Heart right ventricle (tissue), 16 donors: ENCODE measurements at regions of chr15 and their contacts with region 1.

Region 1: GRCh38 chr15:29815000-29815710 is 7.1 kb downstream of the TJP1 start:
- DNase-seq: no peak
- ATAC-seq: peak in 7 of 8 donors; percentile 56 to 87 (median 75)
- H3K4me3 ChIP-seq: no peak overlapping the region
- H3K27ac ChIP-seq: peak overlapping the region in 2 of 10 donors; percentile 9 to 49
- H3K4me1 ChIP-seq: peaks cover 16 to 95% (median 70%) of the 10 kb centered on the region in 9 donors
- H3K27me3 ChIP-seq: peaks cover 0 to 38% (median 0%) of the 10 kb centered on the region in 7 donors
- CTCF ChIP-seq: no peak

Region 2: DNA sequence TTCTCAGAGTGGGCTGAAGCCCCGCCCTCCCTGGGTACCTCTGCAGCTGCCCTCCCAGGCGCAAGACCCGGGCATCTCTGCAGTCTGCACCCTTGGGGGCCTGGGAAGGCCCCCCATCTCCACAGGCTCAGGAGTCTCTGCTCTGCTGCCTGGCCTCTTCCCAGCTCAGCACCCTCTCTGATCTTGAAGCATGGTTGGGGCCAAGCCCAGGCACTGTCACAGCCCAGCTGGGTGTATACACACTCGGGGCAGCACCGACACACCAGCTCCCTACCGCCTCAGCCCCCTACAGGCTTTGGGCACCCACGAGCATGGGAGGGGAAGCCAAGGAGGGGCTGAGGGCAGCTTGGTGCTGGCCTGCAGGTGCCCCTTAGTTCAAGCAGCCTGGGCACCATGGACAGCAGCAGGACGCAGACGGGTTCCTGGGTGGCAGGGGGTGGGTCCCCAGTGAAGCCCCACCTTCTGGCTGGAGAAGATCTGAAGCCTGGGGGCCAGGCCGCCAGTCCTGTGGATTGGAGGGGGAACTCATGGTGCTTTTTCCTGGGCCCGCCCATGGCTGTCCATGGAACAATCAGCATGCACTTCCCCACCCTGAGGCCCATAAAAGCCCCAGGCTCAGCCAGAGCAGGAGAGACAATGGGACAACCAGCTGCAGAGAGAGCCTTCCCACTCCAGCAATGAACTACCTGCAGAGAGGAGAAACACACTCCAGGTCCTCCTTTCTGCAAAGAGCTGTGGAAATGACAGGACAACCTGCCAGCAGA is 163.5 kb before region 1 on chr15:
- intact Hi-C with region 1: no loop called
- DNase-seq: no peak
- ATAC-seq: no peak
- H3K4me3 ChIP-seq: no peak overlapping the region
- H3K27ac ChIP-seq: no peak overlapping the region
- H3K4me1 ChIP-seq: no peaks in the 10 kb centered on the region
- H3K27me3 ChIP-seq: peaks cover 0 to 3% (median 0%) of the 10 kb centered on the region in 7 donors
- CTCF ChIP-seq: no peak

Region 3: GRCh38 chr15:29756358-29757267 is 58.5 kb before region 1 on chr15:
- intact Hi-C with region 1: loop called in 8 of 10 experiments (anchors 5 to 10 kb)
- DNase-seq: no peak
- ATAC-seq: peak in 4 of 8 donors; percentile 51 to 64 (median 56)
- H3K4me3 ChIP-seq: no peak overlapping the region
- H3K27ac ChIP-seq: peak overlapping the region in 5 of 10 donors; percentile 17 to 53 (median 37)
- H3K4me1 ChIP-seq: peaks cover 4 to 46% (median 30%) of the 10 kb centered on the region in 9 donors
- H3K27me3 ChIP-seq: no peaks in the 10 kb centered on the region
- CTCF ChIP-seq: no peak

Region 4: DNA sequence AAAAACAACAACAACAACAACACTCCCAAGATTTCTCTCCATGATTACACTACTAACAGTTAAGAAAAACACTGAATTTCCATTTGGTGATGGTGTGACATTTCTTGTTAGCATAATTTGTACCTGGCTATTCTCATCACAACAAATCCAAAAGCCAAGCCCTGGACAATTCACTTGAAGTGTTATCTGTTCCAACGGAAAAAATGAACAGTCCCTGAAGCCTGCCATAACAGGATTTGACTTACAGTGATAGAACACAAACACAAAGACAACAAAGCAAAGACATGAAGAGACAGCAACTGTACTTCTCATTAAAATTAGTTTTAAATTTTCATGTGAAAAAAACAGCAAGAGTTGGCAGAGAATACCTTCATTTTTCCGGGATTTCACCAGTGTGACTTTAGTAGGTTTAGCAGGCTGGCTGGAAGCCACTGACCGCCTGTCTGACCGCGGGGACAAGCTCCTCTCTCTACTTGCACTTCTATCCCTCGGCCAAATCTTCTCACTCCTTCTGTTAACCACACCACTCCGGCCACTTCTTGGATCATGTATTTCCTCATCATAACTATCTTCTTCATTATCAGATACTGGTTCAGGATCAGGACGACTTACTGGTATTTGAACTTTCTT is 49.1 kb before region 1 on chr15:
- intact Hi-C with region 1: loop called in 5 of 10 experiments (anchors 10 kb)
- DNase-seq: peak; percentile 19 to 30
- ATAC-seq: peak in 6 of 8 donors; percentile 46 to 71 (median 61)
- H3K4me3 ChIP-seq: no peak overlapping the region
- H3K27ac ChIP-seq: peak overlapping the region in 6 of 10 donors; percentile 5 to 45 (median 21)
- H3K4me1 ChIP-seq: peaks cover 6 to 44% (median 30%) of the 10 kb centered on the region in 9 donors
- H3K27me3 ChIP-seq: no peaks in the 10 kb centered on the region
- CTCF ChIP-seq: no peak

Region 5: DNA sequence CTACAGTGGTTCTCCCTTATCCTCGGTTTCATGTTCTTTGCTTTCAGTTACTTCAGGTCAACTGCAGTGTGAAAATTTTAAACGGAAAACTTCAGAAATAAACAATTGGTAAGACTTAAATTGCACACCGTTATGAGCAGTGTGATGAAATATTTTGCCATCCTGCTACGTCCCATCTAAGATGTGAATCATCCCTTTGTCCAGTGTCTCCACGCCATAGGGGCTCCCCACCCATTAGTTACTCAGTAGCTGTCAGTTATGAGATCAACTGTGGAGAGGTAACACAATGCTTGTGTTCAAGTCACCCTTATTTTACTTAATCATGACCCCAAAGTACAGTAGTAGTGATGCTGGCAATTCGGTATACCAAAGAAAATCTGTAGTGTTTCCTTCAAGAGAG is 40.3 kb before region 1 on chr15:
- intact Hi-C with region 1: loop called in 2 of 10 experiments (anchors 1 to 5 kb)
- DNase-seq: no peak
- ATAC-seq: peak in 1 of 8 donors; percentile 45
- H3K4me3 ChIP-seq: no peak overlapping the region
- H3K27ac ChIP-seq: no peak overlapping the region
- H3K4me1 ChIP-seq: peaks cover 0 to 79% (median 56%) of the 10 kb centered on the region in 9 donors
- H3K27me3 ChIP-seq: no peaks in the 10 kb centered on the region
- CTCF ChIP-seq: no peak

Region 6: GRCh38 chr15:29913528-29914135 is 98.5 kb after region 1 on chr15:
- intact Hi-C with region 1: loop called in 5 of 10 experiments (anchors 5 to 10 kb)
- DNase-seq: no peak
- ATAC-seq: peak; percentile 36 to 76 (median 68)
- H3K4me3 ChIP-seq: no peak overlapping the region
- H3K27ac ChIP-seq: peak overlapping the region; percentile 4 to 86 (median 68)
- H3K4me1 ChIP-seq: peaks cover 5 to 62% (median 34%) of the 10 kb centered on the region in 9 donors
- H3K27me3 ChIP-seq: no peaks in the 10 kb centered on the region
- CTCF ChIP-seq: no peak